B cell (primary cell): ENCODE measurements at regions of chr13 and their contacts with region 1.

Region 1: DNA sequence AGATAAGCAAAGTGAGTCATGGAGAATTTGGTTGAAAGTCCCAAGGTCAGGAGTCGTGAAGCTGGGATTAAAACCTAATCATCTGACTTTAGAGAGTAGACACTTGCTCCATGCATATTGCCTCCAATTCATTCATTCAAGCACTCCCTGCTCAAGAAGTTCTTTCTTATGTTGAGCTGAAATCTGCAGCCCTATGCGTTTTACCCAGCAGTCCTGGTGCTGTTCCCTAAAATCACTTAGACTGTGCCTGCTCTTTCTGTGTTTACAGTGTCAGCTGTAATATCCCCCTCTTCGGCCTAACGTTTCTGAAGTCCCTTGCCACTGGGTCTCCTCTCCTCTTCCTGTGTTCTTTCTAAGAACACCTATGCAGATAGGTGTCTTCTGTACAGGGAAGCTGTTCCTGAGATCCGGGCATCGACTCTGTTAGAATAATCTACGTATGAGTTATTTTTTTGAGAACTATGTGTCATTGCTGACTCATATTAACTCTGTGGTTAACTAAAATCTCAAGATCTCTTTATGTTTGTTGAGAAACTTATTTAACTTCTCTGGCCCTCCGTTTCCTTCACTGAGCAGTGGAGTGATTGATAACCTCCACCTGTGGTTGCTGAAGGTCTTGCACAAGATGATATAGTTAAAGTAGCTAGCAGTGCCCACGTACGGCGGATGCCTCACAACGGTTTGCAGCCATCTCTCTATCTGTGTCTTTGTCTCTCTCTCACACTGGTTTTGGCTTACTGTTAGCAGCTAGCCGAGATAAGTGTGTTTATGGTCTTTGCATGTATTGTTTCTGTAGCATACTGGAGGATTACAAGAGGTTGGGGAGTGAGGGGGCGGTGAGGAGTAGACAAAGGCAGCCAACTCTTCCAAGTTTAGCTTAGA is 4.7 kb downstream of the ALOX5AP start:
- DNase-seq: peak; percentile 55
- ATAC-seq: peak; percentile 3
- H3K4me3 ChIP-seq: peak overlapping the region in 2 of 5 experiments; percentile 0 to 52
- H3K4me3 Mint-ChIP-seq: peak overlapping the region; percentile 84
- H3K27ac ChIP-seq: peak overlapping the region in 1 of 2 donors; percentile 45
- H3K27ac Mint-ChIP-seq: peak overlapping the region; percentile 78
- H3K4me1 ChIP-seq: peaks cover 69 to 82% of the 10 kb centered on the region in 2 donors
- H3K4me1 Mint-ChIP-seq: peaks cover 80% of the 10 kb centered on the region
- H3K27me3 ChIP-seq: no peaks in the 10 kb centered on the region
- H3K27me3 Mint-ChIP-seq: no peaks in the 10 kb centered on the region
- CTCF ChIP-seq: no peak

Region 2: GRCh38 chr13:29595380-29596063 is 1144.5 kb before region 1 on chr13 and contains the start of gene SLC7A1:
- CTCF ChIA-PET with region 1: no interaction called
- POLR2A ChIA-PET with region 1: no interaction called
- intact Hi-C with region 1: loop called (anchors 10 kb)
- DNase-seq: peak; percentile 91
- ATAC-seq: peak; percentile 91
- H3K4me3 ChIP-seq: peak within 1 kb of the TSS; percentile 49 to 89 (median 68)
- H3K4me3 Mint-ChIP-seq: peak within 1 kb of the TSS; percentile 92
- H3K27ac ChIP-seq: peak within 1 kb of the TSS; percentile 40 to 82
- H3K27ac Mint-ChIP-seq: peak within 1 kb of the TSS; percentile 92
- H3K4me1 ChIP-seq: peaks cover 9 to 13% of the 10 kb centered on the region in 2 donors
- H3K4me1 Mint-ChIP-seq: peaks cover 34% of the 10 kb centered on the region
- H3K27me3 ChIP-seq: no peaks in the 10 kb centered on the region
- H3K27me3 Mint-ChIP-seq: peaks cover 6% of the 10 kb centered on the region
- CTCF ChIP-seq: no peak
- total RNA-seq, gene SLC7A1: 23.1 and 24.2 TPM in 2 replicates

Region 3: GRCh38 chr13:29791997-29792780 is 947.8 kb before region 1 on chr13:
- CTCF ChIA-PET with region 1: no interaction called
- POLR2A ChIA-PET with region 1: no interaction called
- intact Hi-C with region 1: no loop called
- DNase-seq: no peak
- ATAC-seq: no peak
- H3K4me3 ChIP-seq: no peak overlapping the region
- H3K4me3 Mint-ChIP-seq: no peak overlapping the region
- H3K27ac ChIP-seq: no peak overlapping the region
- H3K27ac Mint-ChIP-seq: no peak overlapping the region
- H3K4me1 ChIP-seq: peaks cover 0 to 8% of the 10 kb centered on the region in 2 donors
- H3K4me1 Mint-ChIP-seq: peaks cover 39% of the 10 kb centered on the region
- H3K27me3 ChIP-seq: no peaks in the 10 kb centered on the region
- H3K27me3 Mint-ChIP-seq: no peaks in the 10 kb centered on the region
- CTCF ChIP-seq: no peak

Region 4: GRCh38 chr13:30371649-30372265 is 368.2 kb before region 1 on chr13:
- CTCF ChIA-PET with region 1: interaction called, 3 read pairs
- POLR2A ChIA-PET with region 1: interaction called, 10 read pairs
- intact Hi-C with region 1: loop called (anchors 5 kb)
- DNase-seq: peak; percentile 98
- ATAC-seq: peak; percentile 83
- H3K4me3 ChIP-seq: peak overlapping the region; percentile 13 to 47 (median 45)
- H3K4me3 Mint-ChIP-seq: peak overlapping the region; percentile 91
- H3K27ac ChIP-seq: peak overlapping the region; percentile 76 to 78
- H3K27ac Mint-ChIP-seq: peak overlapping the region; percentile 94
- H3K4me1 ChIP-seq: peaks cover 75 to 81% of the 10 kb centered on the region in 2 donors
- H3K4me1 Mint-ChIP-seq: peaks cover 84% of the 10 kb centered on the region
- H3K27me3 ChIP-seq: no peaks in the 10 kb centered on the region
- H3K27me3 Mint-ChIP-seq: no peaks in the 10 kb centered on the region
- CTCF ChIP-seq: no peak

Region 5: GRCh38 chr13:30673669-30674521 is 66.1 kb before region 1 on chr13:
- CTCF ChIA-PET with region 1: interaction called, 4 read pairs
- POLR2A ChIA-PET with region 1: interaction called, 10 read pairs
- intact Hi-C with region 1: loop called (anchors 1 kb)
- DNase-seq: peak; percentile 97
- ATAC-seq: peak; percentile 92
- H3K4me3 ChIP-seq: peak overlapping the region; percentile 52 to 73 (median 65)
- H3K4me3 Mint-ChIP-seq: peak overlapping the region; percentile 97
- H3K27ac ChIP-seq: peak overlapping the region; percentile 47 to 57
- H3K27ac Mint-ChIP-seq: peak overlapping the region; percentile 99
- H3K4me1 ChIP-seq: peaks cover 8 to 19% of the 10 kb centered on the region in 2 donors
- H3K4me1 Mint-ChIP-seq: peaks cover 30% of the 10 kb centered on the region
- H3K27me3 ChIP-seq: no peaks in the 10 kb centered on the region
- H3K27me3 Mint-ChIP-seq: no peaks in the 10 kb centered on the region
- CTCF ChIP-seq: peak; percentile 73

Region 6: GRCh38 chr13:30720172-30720869 is 19.7 kb before region 1 on chr13:
- CTCF ChIA-PET with region 1: interaction called, 3 read pairs
- POLR2A ChIA-PET with region 1: interaction called, 7 read pairs
- intact Hi-C with region 1: loop called (anchors 1 kb)
- DNase-seq: peak; percentile 51
- ATAC-seq: peak; percentile 51
- H3K4me3 ChIP-seq: peak overlapping the region in 1 of 5 experiments; percentile 47
- H3K4me3 Mint-ChIP-seq: peak overlapping the region; percentile 69
- H3K27ac ChIP-seq: no peak overlapping the region
- H3K27ac Mint-ChIP-seq: peak overlapping the region; percentile 22
- H3K4me1 ChIP-seq: peaks cover 43 to 44% of the 10 kb centered on the region in 2 donors
- H3K4me1 Mint-ChIP-seq: peaks cover 46% of the 10 kb centered on the region
- H3K27me3 ChIP-seq: no peaks in the 10 kb centered on the region
- H3K27me3 Mint-ChIP-seq: no peaks in the 10 kb centered on the region
- CTCF ChIP-seq: no peak